Activated naive CD4-positive, alpha-beta T cell treated with anti-CD3 and anti-CD28 coated beads for 36 hours (primary cell): ENCODE measurements at regions of chr15 and their contacts with region 1.

Region 1: DNA sequence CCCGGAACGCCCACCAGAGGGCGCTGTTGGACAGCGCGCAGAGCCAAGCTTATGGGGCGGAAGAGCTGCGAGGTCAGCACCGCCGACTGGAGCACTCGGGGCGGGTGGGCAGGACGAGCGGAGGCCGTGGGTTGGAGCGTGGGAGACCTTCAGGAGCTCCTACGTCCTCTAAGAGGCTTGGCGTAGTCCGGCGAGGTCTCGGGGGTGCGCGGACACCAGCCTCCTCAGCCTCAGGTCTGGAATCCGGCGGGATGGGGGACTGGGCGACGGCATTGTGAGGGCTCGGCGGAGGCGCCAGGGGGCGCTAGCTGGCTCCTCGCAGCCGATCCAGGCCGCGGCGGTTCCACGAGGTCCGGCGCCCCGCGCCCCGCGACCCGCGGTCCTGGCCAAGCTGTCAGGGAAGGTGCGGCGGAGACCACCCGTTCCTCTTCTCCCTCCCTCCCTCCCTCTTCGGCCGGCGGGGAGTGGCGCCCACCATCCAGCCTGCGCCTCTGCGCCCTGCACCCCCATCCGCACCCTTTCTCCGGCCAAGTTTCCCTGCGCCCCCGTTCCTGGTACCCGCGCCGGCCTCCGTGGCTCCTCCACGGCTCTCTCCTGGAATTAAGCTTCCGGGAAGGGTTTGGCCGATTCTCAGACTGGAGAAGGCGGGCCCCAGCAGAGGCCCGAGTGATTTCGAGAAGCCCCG is 24.3 kb upstream of the POLG start:
- DNase-seq: peak; percentile 87
- H3K4me3 Mint-ChIP-seq: peak overlapping the region; percentile 77
- H3K27ac Mint-ChIP-seq: no peak overlapping the region
- H3K4me1 Mint-ChIP-seq: peaks cover 14% of the 10 kb centered on the region
- H3K27me3 Mint-ChIP-seq: peaks cover 81% of the 10 kb centered on the region

Region 2: GRCh38 chr15:89334510-89335288 is 24.2 kb before region 1 on chr15 and contains the start of gene POLG:
- CTCF ChIA-PET with region 1: interaction called, 10 read pairs
- intact Hi-C with region 1: no loop called
- DNase-seq: peak; percentile 99
- H3K4me3 Mint-ChIP-seq: peak within 1 kb of the TSS; percentile 90
- H3K27ac Mint-ChIP-seq: peak within 1 kb of the TSS; percentile 94
- H3K4me1 Mint-ChIP-seq: peaks cover 52% of the 10 kb centered on the region
- H3K27me3 Mint-ChIP-seq: peaks cover 3% of the 10 kb centered on the region
- total RNA-seq, gene POLG: 93.0 to 96.5 TPM

Region 3: DNA sequence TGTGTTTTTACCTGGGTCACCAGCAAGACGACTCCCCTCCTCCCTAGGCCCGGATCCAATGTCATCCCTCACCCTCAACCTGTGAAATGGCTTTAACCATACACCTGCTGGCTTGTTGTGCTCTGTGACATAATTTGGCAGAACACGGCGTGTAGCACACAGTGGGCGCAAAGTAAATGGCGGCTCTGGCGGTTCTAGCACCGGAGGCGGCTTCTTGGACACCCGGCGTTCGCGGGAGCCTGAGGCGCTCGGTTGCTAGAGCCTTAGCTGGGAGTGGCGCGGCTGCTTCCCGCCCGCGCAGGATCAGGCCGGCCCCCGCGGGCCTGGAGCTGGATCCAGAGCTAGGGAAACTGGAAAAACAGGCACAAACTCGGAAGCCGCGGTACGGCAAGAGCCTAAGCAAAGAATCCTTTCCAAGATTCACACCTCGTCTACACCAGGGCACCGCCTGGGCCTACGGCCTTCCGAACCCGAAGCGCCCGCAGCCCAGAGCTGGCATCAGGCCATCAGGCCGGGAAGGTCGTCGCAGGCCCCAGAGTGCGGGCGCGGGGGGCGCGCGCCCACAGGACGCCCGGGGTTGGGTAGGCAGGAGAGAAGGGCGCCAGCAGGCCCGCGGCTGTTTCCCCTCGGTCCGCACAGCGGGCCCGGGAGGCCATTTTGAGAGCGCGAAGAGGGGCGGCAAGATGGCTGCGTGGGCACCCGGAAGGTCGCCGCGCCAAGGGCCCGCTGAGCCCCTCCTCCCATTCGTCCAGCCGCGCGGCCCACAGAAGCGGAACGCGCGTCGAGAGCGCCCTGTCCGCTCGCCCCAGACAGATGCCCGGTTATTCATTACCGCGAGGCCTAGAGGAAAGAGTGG is 19.6 kb after region 1 on chr15:
- CTCF ChIA-PET with region 1: interaction called, 47 read pairs
- intact Hi-C with region 1: loop called (anchors 2 kb)
- DNase-seq: no peak
- H3K4me3 Mint-ChIP-seq: peak overlapping the region; percentile 69
- H3K27ac Mint-ChIP-seq: peak overlapping the region; percentile 51
- H3K4me1 Mint-ChIP-seq: peaks cover 5% of the 10 kb centered on the region
- H3K27me3 Mint-ChIP-seq: peaks cover 55% of the 10 kb centered on the region

Region 4: GRCh38 chr15:89399238-89400120 is 40.6 kb after region 1 on chr15:
- CTCF ChIA-PET with region 1: interaction called, 21 read pairs
- intact Hi-C with region 1: loop called (anchors 1 kb)
- DNase-seq: peak; percentile 66
- H3K4me3 Mint-ChIP-seq: peak overlapping the region; percentile 73
- H3K27ac Mint-ChIP-seq: no peak overlapping the region
- H3K4me1 Mint-ChIP-seq: peaks cover 14% of the 10 kb centered on the region
- H3K27me3 Mint-ChIP-seq: peaks cover 60% of the 10 kb centered on the region

Region 5: GRCh38 chr15:89423981-89424380 is 65.1 kb after region 1 on chr15:
- CTCF ChIA-PET with region 1: interaction called, 78 read pairs
- intact Hi-C with region 1: no loop called
- DNase-seq: no peak
- H3K4me3 Mint-ChIP-seq: no peak overlapping the region
- H3K27ac Mint-ChIP-seq: no peak overlapping the region
- H3K4me1 Mint-ChIP-seq: no peaks in the 10 kb centered on the region
- H3K27me3 Mint-ChIP-seq: peaks cover 17% of the 10 kb centered on the region

Region 6: GRCh38 chr15:89472785-89473256 is 113.9 kb after region 1 on chr15:
- CTCF ChIA-PET with region 1: interaction called, 18 read pairs
- intact Hi-C with region 1: loop called (anchors 1 kb)
- DNase-seq: peak; percentile 63
- H3K4me3 Mint-ChIP-seq: no peak overlapping the region
- H3K27ac Mint-ChIP-seq: no peak overlapping the region
- H3K4me1 Mint-ChIP-seq: peaks cover 2% of the 10 kb centered on the region
- H3K27me3 Mint-ChIP-seq: peaks cover 10% of the 10 kb centered on the region